Activated CD4-positive, alpha-beta T cell treated with anti-CD3 and anti-CD28 coated beads, Interleukin-2, amount 10 ng/mL, durations not matched to agents 7 days and 5 days (primary cell): ENCODE measurements at regions of chr11 and their contacts with region 1.

Region 1: DNA sequence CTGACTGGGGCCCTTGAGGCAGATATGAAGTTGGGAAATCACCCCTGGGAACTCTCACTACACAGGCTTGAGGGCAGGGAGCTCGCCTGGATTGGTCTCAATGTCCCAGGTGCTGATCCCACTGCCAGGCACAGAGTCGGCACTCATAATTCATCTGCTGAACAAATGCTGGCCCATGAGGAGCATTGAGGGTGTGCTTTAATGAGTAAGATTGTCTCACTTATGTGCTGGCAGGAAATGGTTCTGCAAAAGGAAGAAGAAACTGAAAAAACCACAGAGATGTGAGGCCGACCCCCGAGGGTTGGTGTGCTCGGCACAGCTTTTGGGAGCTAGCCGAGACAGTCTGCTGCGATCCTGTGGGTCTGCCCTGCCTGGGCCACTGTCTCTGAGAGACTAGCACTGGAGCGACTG is 9.4 kb downstream of the PLAAT2 start:
- DNase-seq: peak; percentile 64
- H3K4me3 Mint-ChIP-seq: peak overlapping the region; percentile 49
- H3K27ac Mint-ChIP-seq: peak overlapping the region; percentile 96
- H3K4me1 Mint-ChIP-seq: peaks cover 51% of the 10 kb centered on the region
- H3K27me3 Mint-ChIP-seq: no peaks in the 10 kb centered on the region

Region 2: GRCh38 chr11:63536669-63537292 is 17.0 kb before region 1 on chr11 and contains the start of gene PLAAT4:
- CTCF ChIA-PET with region 1: interaction called, 12 read pairs
- POLR2A ChIA-PET with region 1: interaction called, 6 read pairs
- DNase-seq: peak; percentile 56
- H3K4me3 Mint-ChIP-seq: peak within 1 kb of the TSS; percentile 88
- H3K27ac Mint-ChIP-seq: peak within 1 kb of the TSS; percentile 94
- H3K4me1 Mint-ChIP-seq: peaks cover 75% of the 10 kb centered on the region
- H3K27me3 Mint-ChIP-seq: no peaks in the 10 kb centered on the region
- total RNA-seq, gene PLAAT4: 136 to 137 TPM